ENCODE measurements at regions of chr10 and their contacts with region 1.

Region 1: GRCh38 chr10:71494980-71495381 is 98.3 kb downstream of the CDH23 start:
- DNase-seq: no peak
- H3K4me3 ChIP-seq: no peak overlapping the region
- H3K27ac ChIP-seq: no peak overlapping the region
- H3K4me1 ChIP-seq: peaks cover 13% of the 10 kb centered on the region
- H3K27me3 ChIP-seq: no peaks in the 10 kb centered on the region
- CTCF ChIP-seq: no peak

Region 2: GRCh38 chr10:71534568-71535194 is 39.7 kb after region 1 on chr10:
- CTCF ChIA-PET with region 1: no interaction called
- POLR2A ChIA-PET with region 1: no interaction called
- intact Hi-C with region 1: no loop called
- DNase-seq: no peak
- H3K4me3 ChIP-seq: no peak overlapping the region
- H3K27ac ChIP-seq: no peak overlapping the region
- H3K4me1 ChIP-seq: no peaks in the 10 kb centered on the region
- H3K27me3 ChIP-seq: no peaks in the 10 kb centered on the region; the same call in 1 of the 2 replicates
- CTCF ChIP-seq: no peak

Region 3: GRCh38 chr10:71845410-71846405 is 350.7 kb after region 1 on chr10:
- CTCF ChIA-PET with region 1: interaction called, 20 read pairs
- POLR2A ChIA-PET with region 1: no interaction called
- intact Hi-C with region 1: no loop called
- DNase-seq: peak in 1 of 2 experiments; percentile 21
- H3K4me3 ChIP-seq: no peak overlapping the region
- H3K27ac ChIP-seq: peak overlapping the region; percentile 52
- H3K4me1 ChIP-seq: peaks cover 74% of the 10 kb centered on the region
- H3K27me3 ChIP-seq: no peaks in the 10 kb centered on the region
- CTCF ChIP-seq: no peak

Region 4: DNA sequence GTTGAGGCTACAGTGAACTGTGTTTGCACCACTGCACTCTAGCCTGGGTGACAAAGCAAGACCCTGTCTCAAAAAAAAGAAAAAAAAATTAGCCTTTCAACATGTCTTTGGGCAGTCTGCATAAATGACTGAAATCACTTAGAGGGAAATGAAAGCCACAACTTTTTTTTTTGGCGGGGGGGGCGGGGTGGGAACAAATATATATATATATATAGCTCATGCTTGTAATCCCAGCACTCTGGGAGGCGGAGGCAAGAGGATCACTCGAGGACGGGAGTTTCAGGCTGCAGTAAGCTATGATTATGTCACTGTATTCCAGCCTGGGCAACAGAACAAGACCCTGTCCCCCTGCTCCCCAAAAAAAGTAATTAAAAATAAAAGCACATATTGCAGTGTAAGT is 1154.3 kb after region 1 on chr10:
- CTCF ChIA-PET with region 1: no interaction called
- POLR2A ChIA-PET with region 1: interaction called, 13 read pairs
- intact Hi-C with region 1: no loop called
- DNase-seq: no peak
- H3K4me3 ChIP-seq: no peak overlapping the region
- H3K27ac ChIP-seq: no peak overlapping the region
- H3K4me1 ChIP-seq: no peaks in the 10 kb centered on the region
- H3K27me3 ChIP-seq: no peaks in the 10 kb centered on the region
- CTCF ChIP-seq: no peak